ENCODE measurements at regions of chr11 and their contacts with region 1.

Region 1: DNA sequence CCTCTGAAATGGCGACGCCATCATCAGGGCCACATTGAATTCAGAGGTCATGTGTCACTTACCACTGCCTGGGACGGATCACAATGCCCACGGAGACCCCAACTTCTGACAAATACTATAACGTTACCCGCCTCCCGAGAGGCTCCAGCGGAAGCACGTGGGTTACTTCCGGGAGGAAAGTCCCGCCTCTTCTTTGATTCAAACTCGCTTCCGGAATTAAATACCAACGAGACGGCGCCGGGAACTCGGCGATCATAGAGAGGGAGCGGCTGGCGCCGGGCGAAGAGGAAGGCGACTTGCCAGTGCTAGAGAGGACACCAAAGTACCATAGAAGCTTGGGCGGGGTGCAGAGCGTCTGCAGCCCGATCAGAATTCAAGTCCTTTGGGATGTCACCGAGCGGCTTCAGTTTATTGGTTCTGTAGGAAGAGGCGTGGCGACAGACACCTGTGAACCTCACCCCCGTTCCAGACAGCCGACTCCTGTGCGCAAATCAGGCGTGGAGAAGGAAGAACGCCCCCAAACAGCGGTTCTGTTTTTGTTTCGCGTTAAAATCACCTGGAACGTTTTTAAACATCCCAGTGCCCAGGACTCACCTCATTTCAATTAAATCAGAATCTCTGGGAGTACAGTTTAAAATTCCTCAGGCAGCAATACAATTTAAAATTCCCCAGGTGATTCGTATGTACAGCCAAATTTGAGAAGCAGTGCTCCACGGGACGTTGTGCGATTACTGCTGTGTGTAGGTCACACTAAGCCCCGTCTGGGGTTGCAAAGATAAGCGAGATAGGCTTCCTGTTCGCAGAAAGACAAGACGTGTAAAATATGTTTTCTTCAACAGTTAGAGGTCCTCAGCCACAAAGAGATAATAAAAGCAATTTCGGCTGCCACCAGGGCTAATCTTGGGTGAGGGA is at the start of gene TIMM10:
- DNase-seq: peak; percentile 99
- H3K4me3 ChIP-seq: peak within 1 kb of the TSS; percentile 97
- H3K27ac ChIP-seq: peak within 1 kb of the TSS; percentile 74
- H3K4me1 ChIP-seq: peaks cover 31% of the 10 kb centered on the region
- CTCF ChIP-seq: peak; percentile 32
- total RNA-seq, gene TIMM10: 163 and 195 TPM in 2 replicates

Region 2: DNA sequence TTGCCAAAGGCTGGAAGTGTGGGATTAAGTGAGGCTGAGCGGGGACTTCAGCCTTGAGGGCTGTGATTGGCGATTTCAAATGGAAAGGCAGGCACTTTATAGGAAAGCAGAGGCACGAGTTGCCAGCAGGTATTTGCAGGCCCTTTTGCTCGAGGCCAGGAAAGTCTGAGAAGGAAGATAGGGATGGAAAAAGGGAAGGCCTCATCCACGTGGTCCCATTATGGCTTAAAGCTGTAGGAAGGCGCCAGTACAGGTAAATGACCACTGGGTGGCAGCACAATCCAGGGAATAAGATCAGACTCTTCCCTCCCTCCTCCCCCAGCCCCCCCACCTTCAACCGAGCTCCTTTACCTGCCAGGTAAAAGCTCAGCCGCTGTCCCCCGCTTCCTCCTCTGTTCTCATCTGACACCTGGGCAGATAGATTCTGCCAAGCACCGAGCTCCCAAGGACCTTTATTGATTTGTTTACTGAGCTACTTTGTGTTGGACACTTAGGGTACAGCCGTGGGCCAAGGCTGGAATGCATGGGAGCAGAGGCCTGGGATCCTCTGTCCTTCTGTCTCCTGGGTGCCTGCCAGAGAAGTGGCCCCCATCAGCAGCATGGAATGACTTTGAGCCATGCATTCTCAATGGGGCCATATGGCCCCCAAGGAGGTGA is 185.2 kb before region 1 on chr11:
- CTCF ChIA-PET with region 1: no interaction called
- POLR2A ChIA-PET with region 1: no interaction called
- intact Hi-C with region 1: loop called (anchors 5 kb)
- DNase-seq: peak; percentile 77
- H3K4me3 ChIP-seq: no peak overlapping the region
- H3K27ac ChIP-seq: no peak overlapping the region
- H3K4me1 ChIP-seq: peaks cover 4% of the 10 kb centered on the region
- CTCF ChIP-seq: peak; percentile 84

Region 3: DNA sequence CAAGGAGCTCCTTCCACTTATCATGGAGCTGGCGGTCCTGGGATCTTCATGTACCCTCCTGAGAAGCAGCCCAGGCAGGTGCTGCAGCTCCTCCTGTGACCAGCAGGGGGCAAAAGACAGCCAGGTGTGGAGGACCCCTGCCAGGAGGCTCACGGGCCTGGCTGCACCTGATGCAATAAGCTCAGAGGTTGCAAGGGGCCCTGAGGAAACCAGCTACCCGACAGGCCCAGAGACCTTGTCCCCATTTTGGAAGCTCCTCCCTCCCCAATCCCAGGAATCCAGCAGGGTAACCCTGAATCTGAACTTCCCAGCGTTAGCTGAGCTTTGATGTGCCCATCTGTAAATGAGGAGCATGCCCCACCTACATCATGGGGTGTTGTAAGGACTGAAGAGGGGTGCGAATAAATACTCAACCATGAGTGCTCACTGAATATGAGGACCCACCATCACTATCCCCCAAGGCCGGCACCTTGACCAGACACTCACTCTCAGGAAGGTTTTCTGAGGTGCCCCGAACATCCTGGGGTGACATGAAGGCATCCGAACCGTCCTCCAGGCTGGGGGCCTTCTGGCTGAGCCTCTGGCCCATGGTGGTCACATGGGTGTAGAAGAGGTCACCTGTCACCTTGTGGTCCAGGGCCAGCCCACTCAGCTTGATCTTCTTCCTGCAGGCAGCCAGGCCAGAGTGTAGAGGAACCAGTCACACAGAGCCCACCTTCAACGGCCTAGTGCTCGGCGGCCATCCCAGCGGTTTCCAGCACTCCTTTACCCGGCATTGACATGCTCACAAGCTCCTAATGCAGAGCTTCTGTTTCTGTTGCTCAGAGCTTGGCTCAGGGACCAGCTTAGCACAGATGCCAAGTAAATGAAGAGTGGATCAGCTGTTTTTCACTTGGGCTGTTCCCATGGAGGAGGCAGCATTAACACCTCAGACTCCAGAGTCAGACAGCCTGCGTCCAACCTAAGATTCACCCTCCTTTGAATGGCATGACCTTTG is 37.0 kb before region 1 on chr11:
- CTCF ChIA-PET with region 1: interaction called, 60 read pairs
- POLR2A ChIA-PET with region 1: interaction called, 34 read pairs
- intact Hi-C with region 1: loop called (anchors 1 kb)
- DNase-seq: peak; percentile 91
- H3K4me3 ChIP-seq: no peak overlapping the region
- H3K27ac ChIP-seq: peak overlapping the region; percentile 75
- H3K4me1 ChIP-seq: peaks cover 16% of the 10 kb centered on the region
- CTCF ChIP-seq: peak; percentile 96

Region 4: GRCh38 chr11:57567515-57568329 is 36.9 kb after region 1 on chr11 and contains the start of gene UBE2L6:
- CTCF ChIA-PET with region 1: no interaction called
- POLR2A ChIA-PET with region 1: interaction called, 4 read pairs
- intact Hi-C with region 1: loop called (anchors 2 kb)
- DNase-seq: peak; percentile 84
- H3K4me3 ChIP-seq: peak within 1 kb of the TSS; percentile 81
- H3K27ac ChIP-seq: peak within 1 kb of the TSS; percentile 79
- H3K4me1 ChIP-seq: peaks cover 18% of the 10 kb centered on the region
- CTCF ChIP-seq: peak; percentile 95; the same call in 1 of the 2 replicates
- total RNA-seq, gene UBE2L6: 64.7 and 68.9 TPM in 2 replicates

Region 5: DNA sequence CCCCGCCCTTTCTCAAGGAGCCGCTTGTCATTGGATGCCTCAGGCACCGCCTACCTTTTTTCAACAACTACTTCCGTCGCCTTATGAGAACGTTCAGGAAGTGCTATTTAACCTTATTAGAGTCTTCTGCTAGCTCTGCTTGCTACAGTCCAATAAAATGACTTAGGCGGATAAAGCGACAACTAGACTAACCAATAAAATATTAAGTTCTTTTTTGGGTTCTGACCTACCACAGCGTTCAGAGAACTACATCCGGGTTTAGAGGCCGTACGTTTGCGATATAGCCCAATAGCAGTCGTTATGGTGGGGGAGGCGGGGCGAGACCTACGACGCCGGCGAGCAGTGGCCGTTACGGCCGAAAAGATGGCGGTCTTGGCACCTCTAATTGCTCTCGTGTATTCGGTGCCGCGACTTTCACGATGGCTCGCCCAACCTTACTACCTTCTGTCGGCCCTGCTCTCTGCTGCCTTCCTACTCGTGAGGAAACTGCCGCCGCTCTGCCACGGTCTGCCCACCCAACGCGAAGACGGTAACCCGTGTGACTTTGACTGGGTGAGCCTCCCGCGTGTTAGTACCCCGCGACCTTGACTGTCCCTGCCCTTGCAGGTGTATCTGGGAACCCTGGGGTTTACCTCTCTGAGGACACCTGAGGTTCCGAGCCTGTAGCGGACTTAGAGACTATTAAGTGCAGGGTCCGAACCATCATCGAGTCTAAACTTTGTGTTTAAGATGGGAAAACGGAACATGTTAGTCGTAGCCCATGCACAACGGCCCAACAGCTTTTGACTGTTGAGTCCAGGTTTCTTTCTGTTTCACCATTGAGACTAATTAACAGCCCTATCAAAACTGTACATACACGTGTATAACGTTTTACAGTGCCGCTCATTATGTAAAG is 181.7 kb after region 1 on chr11 and contains the start of gene TMX2:
- CTCF ChIA-PET with region 1: no interaction called
- POLR2A ChIA-PET with region 1: no interaction called
- intact Hi-C with region 1: loop called (anchors 1 kb)
- DNase-seq: peak; percentile 98
- H3K4me3 ChIP-seq: peak within 1 kb of the TSS; percentile 89
- H3K27ac ChIP-seq: peak within 1 kb of the TSS; percentile 82
- H3K4me1 ChIP-seq: peaks cover 28% of the 10 kb centered on the region
- CTCF ChIP-seq: no peak
- total RNA-seq, gene TMX2: 53.3 and 54.9 TPM in 2 replicates

Region 6: DNA sequence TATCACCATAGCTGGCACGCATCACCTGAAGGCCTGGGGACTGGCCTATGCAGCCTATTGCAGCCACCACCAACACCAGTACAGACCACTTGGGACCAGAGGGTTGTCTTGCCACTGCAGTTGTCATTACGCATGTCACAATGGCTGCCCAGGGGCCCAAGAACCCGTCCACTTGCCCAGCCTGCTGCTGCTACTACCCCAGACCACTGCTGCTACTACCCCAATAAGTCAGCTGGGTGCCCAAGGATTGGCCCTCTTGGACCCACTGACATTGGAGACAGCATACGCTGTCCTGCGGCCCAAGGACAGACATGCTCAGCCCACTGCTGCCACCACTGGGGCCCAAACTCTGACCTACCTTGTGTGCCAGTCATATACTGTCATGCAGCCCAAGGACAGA is 390.1 kb after region 1 on chr11:
- CTCF ChIA-PET with region 1: no interaction called
- POLR2A ChIA-PET with region 1: no interaction called
- intact Hi-C with region 1: no loop called
- DNase-seq: no peak
- H3K4me3 ChIP-seq: no peak overlapping the region
- H3K27ac ChIP-seq: no peak overlapping the region
- H3K4me1 ChIP-seq: no peaks in the 10 kb centered on the region
- CTCF ChIP-seq: no peak